PC-9 (cell line): ENCODE measurements at regions of chr9 and their contacts with region 1.

Region 1: DNA sequence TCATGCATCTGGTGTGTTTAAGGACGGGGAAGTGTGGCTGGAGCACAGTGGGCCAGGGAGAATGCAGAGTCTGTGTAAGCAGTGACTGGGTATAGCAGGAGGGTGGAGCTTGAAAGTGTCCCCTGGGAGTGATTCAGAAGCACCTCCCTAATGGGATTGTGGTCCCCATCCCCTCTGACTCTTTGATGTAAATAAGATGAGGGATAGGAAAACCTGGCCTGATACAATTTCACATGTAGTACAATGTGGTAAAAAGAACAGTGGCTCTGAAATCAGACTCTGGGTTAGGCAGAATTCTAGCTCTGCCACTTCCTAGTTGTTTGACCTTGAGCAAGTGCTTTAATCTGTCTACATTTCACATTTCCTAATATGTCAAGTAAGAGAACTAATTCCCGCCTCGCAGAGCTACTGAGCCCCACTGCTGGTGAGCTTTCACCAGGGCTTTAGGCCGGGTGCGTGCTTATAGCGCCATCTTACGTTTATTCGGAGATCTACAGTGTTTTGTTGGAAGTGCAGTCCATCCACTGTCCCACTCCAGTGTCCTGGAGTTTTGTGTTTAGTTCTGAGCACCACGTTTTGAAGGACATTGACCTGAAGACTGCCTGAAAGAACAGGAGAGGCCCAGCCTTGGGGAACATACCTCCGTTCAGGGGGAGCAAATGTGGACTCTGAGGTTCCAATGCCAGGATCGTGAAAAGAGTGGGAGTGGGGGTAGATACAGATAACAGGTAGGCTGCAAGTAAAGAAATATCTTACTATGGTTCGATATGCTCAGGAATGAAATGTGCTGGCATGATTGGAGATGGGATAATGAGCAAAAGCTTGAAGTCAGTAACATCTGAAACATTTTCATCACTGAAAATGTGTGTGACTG is 51.2 kb upstream of the TESK1 start:
- DNase-seq: peak; percentile 39 to 44
- H3K4me3 ChIP-seq: no peak overlapping the region
- H3K27ac ChIP-seq: no peak overlapping the region
- H3K4me1 ChIP-seq: no peaks in the 10 kb centered on the region
- H3K27me3 ChIP-seq: no peaks in the 10 kb centered on the region
- CTCF ChIP-seq: peak; percentile 80

Region 2: GRCh38 chr9:35481347-35481975 is 72.4 kb before region 1 on chr9:
- CTCF ChIA-PET with region 1: interaction called, 8 read pairs
- POLR2A ChIA-PET with region 1: no interaction called
- intact Hi-C with region 1: loop called (anchors 1 kb)
- DNase-seq: peak; percentile 50 to 57
- H3K4me3 ChIP-seq: no peak overlapping the region
- H3K27ac ChIP-seq: no peak overlapping the region
- H3K4me1 ChIP-seq: no peaks in the 10 kb centered on the region
- H3K27me3 ChIP-seq: no peaks in the 10 kb centered on the region
- CTCF ChIP-seq: peak; percentile 74

Region 3: GRCh38 chr9:35489313-35490154 is 64.4 kb before region 1 on chr9 and contains the start of gene RUSC2:
- CTCF ChIA-PET with region 1: no interaction called
- POLR2A ChIA-PET with region 1: no interaction called
- intact Hi-C with region 1: loop called (anchors 1 kb)
- DNase-seq: peak; percentile 64 to 82
- H3K4me3 ChIP-seq: peak within 1 kb of the TSS; percentile 76
- H3K27ac ChIP-seq: peak within 1 kb of the TSS; percentile 86
- H3K4me1 ChIP-seq: peaks cover 18% of the 10 kb centered on the region
- H3K27me3 ChIP-seq: no peaks in the 10 kb centered on the region
- CTCF ChIP-seq: peak; percentile 39; the same call in 1 of the 2 replicates
- total RNA-seq, gene RUSC2: 10.1 and 12.5 TPM in 2 replicates

Region 4: DNA sequence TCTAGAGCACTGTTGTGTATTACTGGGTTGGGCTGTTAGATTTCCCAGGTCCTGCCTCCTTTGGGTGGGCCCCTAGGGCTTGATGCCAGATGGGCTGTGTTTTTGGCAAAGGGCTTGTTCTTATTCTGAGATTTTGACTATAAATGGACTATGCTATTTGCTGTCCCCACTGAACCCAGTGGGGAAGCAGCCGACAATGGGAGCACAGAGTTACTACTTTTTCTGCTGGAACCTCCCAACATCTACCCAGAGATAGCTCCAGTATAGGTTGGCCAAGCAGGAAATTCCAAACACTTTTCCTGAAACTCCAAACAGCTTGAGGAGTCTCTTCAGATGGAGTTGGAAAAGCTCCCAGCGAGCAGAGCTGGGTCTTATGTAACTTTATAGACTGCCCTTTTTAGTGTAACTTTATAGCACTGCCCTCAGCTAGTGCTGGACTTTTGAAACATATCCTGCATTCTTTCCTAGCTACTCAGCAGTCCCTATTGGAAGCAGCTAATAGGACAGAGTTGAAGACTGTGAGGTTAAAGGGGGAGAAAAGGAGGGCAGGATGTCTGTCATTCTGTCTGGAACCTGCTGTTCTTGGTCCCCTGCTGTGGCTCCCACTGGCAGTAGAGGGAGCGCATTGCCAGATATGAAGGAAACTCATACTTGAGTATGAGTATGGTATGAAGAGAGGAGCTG is 43.0 kb before region 1 on chr9:
- CTCF ChIA-PET with region 1: interaction called, 17 read pairs
- POLR2A ChIA-PET with region 1: interaction called, 5 read pairs
- intact Hi-C with region 1: loop called (anchors 2 kb)
- DNase-seq: peak; percentile 51 to 90
- H3K4me3 ChIP-seq: peak overlapping the region; percentile 29; the same call in 1 of the 2 replicates
- H3K27ac ChIP-seq: peak overlapping the region; percentile 84
- H3K4me1 ChIP-seq: peaks cover 49% of the 10 kb centered on the region
- H3K27me3 ChIP-seq: no peaks in the 10 kb centered on the region
- CTCF ChIP-seq: no peak; the same call in 1 of the 2 replicates

Region 5: GRCh38 chr9:35910613-35911359 is 356.9 kb after region 1 on chr9:
- CTCF ChIA-PET with region 1: no interaction called
- POLR2A ChIA-PET with region 1: no interaction called
- intact Hi-C with region 1: no loop called
- DNase-seq: peak in 1 of 2 experiments; percentile 39
- H3K4me3 ChIP-seq: no peak overlapping the region
- H3K27ac ChIP-seq: no peak overlapping the region
- H3K4me1 ChIP-seq: peaks cover 53% of the 10 kb centered on the region
- H3K27me3 ChIP-seq: no peaks in the 10 kb centered on the region
- CTCF ChIP-seq: peak; percentile 67